Activated CD4-positive, alpha-beta T cell treated with anti-CD3 and anti-CD28 coated beads, Interleukin-2, amount 10 ng/mL, durations not matched to agents 24 days and 14 days (primary cell): ENCODE measurements at regions of chr10 and their contacts with region 1.

Region 1: GRCh38 chr10:114346271-114347031 is 57.9 kb downstream of the AFAP1L2 start:
- DNase-seq: no peak
- H3K4me3 Mint-ChIP-seq: no peak overlapping the region
- H3K27ac Mint-ChIP-seq: peak overlapping the region; percentile 7
- H3K4me1 Mint-ChIP-seq: no peaks in the 10 kb centered on the region
- H3K27me3 Mint-ChIP-seq: no peaks in the 10 kb centered on the region

Region 2: GRCh38 chr10:114310346-114310745 is 36.1 kb before region 1 on chr10:
- intact Hi-C with region 1: loop called (anchors 5 kb)
- DNase-seq: no peak
- H3K4me3 Mint-ChIP-seq: no peak overlapping the region
- H3K27ac Mint-ChIP-seq: no peak overlapping the region
- H3K4me1 Mint-ChIP-seq: peaks cover 4% of the 10 kb centered on the region
- H3K27me3 Mint-ChIP-seq: no peaks in the 10 kb centered on the region

Region 3: GRCh38 chr10:114403541-114404161 is 57.2 kb after region 1 on chr10:
- intact Hi-C with region 1: loop called (anchors 5 kb)
- DNase-seq: no peak
- H3K4me3 Mint-ChIP-seq: no peak overlapping the region
- H3K27ac Mint-ChIP-seq: no peak overlapping the region
- H3K4me1 Mint-ChIP-seq: peaks cover 9% of the 10 kb centered on the region
- H3K27me3 Mint-ChIP-seq: peaks cover 65% of the 10 kb centered on the region